ENCODE measurements at regions of chr7 and their contacts with region 1.

Region 1: DNA sequence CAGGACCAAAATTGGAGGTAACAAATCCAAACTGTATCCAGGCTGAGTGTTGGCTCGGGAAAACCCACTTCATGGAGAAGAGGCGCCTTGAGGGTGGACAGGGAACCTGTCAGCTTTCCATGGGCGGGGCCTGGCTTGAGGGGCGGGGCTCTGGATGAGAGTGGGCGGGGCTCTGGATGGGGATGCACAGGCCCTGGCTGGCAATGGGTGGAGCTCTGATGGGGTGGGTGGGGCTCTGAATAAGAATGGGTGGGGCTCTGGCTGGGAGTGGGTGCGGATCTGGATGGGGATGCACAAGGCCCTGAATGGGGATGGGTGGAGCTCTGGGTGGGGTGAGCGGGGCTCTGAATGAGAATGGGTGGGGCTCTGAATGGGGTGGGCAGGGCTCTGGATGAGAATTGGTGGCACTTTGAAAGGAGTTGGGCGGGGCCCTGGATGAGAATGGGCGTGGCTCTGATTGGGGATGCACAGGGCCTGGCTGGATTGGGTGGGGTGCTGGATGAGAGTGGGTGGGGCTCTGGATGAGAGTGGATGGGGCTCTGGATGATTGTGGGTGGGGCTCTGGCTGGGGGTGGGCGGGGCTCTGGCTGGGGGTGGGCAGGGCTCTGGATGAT is 96.6 kb upstream of the NPTX2 start:
- DNase-seq: no peak
- H3K4me3 ChIP-seq: no peak overlapping the region
- H3K27ac ChIP-seq: no peak overlapping the region
- H3K4me1 ChIP-seq: no peaks in the 10 kb centered on the region
- H3K27me3 ChIP-seq: no peaks in the 10 kb centered on the region
- CTCF ChIP-seq: no peak

Region 2: GRCh38 chr7:98448766-98449165 is 71.7 kb before region 1 on chr7:
- CTCF ChIA-PET with region 1: no interaction called
- dilution Hi-C with region 1: loop called (anchors 5 kb)
- in situ Hi-C with region 1: no loop called
- intact Hi-C with region 1: no loop called
- DNase-seq: no peak
- H3K4me3 ChIP-seq: no peak overlapping the region
- H3K27ac ChIP-seq: no peak overlapping the region
- H3K4me1 ChIP-seq: no peaks in the 10 kb centered on the region
- H3K27me3 ChIP-seq: no peaks in the 10 kb centered on the region
- CTCF ChIP-seq: no peak

Region 3: DNA sequence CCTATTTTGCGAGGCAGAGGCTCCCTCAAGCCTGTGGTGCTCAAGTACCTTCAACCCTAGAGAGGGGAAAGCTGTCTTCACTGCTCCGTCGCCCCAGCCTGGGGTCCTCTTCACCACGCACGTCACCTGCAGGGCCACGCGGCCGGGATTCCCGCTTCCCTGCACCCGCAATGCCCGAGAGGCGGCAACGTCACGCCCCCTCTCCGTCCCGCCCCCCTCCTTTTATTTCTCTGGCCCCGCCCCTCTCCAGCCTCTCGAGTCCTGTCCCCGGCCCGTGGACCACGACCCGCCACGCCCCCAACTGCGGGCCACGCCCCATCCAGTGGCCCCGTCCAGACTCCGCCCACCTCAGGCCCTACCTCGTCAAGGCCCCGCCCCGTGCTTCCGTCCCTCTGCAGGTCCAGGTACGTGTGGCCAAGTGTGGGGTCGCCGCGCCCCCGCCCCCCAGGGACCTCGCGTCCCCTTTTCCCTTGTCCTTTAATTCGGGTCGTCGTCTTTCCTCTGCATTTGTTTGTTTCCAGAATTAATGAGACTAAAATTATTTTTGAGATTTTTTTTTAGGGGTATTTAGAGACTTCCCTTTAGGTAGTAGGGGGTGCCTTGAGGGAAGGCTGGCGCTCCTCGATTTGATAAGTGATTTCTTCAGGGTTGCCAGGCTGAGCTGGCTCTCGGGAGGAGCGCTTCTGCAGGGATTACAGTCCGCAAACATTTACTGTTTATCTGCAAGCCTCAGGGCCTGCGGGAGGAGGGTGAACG is 49.8 kb before region 1 on chr7:
- CTCF ChIA-PET with region 1: no interaction called
- dilution Hi-C with region 1: no loop called
- in situ Hi-C with region 1: no loop called
- intact Hi-C with region 1: no loop called
- DNase-seq: no peak
- H3K4me3 ChIP-seq: no peak overlapping the region
- H3K27ac ChIP-seq: no peak overlapping the region
- H3K4me1 ChIP-seq: peaks cover 2% of the 10 kb centered on the region
- H3K27me3 ChIP-seq: no peaks in the 10 kb centered on the region
- CTCF ChIP-seq: no peak